ENCODE measurements at regions of chr2 and their contacts with region 1.

Region 1: DNA sequence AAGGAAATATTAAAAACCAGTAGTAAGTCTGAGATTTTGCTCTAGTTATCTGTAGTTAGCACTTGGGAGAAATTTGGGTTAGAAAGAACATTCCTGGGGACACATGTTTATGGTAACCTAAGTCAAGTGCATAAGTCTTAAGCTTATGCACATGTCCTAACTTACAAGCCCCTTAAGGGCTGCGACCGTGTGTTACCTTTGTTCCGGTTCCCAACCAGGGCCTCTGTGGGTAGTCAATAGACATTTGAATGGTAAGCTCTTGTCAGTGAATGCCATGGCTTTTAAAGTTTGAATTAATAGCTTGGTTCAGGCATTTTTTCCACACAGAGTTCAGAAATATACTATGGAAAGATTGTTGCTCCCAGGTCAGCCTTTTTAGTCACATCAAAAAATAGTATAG is 64.7 kb upstream of the CWC22 start:
- DNase-seq: no peak
- H3K4me3 Mint-ChIP-seq: no peak overlapping the region
- H3K27ac Mint-ChIP-seq: no peak overlapping the region
- H3K4me1 Mint-ChIP-seq: no peaks in the 10 kb centered on the region
- H3K27me3 Mint-ChIP-seq: peaks cover 3% of the 10 kb centered on the region

Region 2: DNA sequence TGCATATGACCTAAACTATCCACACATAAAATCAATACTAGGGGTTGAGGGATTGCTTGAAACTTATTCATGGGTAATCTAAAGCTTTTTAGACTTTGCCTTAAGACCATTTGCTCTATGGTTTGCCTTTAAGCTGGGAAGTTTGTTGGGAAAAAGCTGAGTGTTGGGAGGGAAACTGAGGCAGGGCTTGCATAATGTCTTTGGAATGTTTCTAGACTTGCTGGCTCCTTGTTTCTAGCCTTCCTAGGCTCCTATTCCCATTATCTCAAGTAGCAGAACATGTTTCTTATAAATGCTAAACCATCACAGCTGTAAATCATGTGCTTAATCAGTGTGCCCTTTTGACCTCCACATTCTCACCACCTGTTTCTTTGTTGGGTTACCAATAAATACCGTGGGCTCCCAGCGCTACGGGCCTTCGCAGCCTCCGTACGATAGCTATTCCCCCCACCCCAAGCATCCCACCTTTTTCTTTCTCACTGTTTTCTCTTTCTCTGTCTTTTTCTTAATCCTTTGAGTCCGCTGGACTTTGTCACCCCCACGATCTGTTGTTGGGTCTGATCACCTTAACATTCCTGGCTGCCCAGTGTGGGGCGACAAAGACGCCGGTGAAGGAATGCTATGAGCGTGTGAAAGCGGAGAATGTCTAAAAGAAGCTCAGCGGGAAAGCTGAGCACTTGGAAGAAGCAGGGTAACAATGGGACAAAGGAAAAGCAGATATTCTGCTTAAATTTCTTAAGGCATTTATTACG is 15.3 kb before region 1 on chr2:
- intact Hi-C with region 1: loop called (anchors 2 kb)
- DNase-seq: no peak
- H3K4me3 Mint-ChIP-seq: no peak overlapping the region
- H3K27ac Mint-ChIP-seq: no peak overlapping the region
- H3K4me1 Mint-ChIP-seq: no peaks in the 10 kb centered on the region
- H3K27me3 Mint-ChIP-seq: peaks cover 2% of the 10 kb centered on the region